MCF 10A (cell line): ENCODE measurements at regions of chr11 and their contacts with region 1.

Region 1: GRCh38 chr11:62905927-62906531 is 15.1 kb downstream of the CHRM1 start:
- DNase-seq: peak; percentile 81
- H3K4me3 Mint-ChIP-seq: no peak overlapping the region
- H3K27ac Mint-ChIP-seq: no peak overlapping the region
- H3K4me1 Mint-ChIP-seq: peaks cover 6% of the 10 kb centered on the region
- H3K27me3 Mint-ChIP-seq: peaks cover 14% of the 10 kb centered on the region
- CTCF ChIP-seq: peak; percentile 95

Region 2: GRCh38 chr11:62816557-62816956 is 89.5 kb before region 1 on chr11:
- CTCF ChIA-PET with region 1: no interaction called
- POLR2A ChIA-PET with region 1: no interaction called
- intact Hi-C with region 1: no loop called
- DNase-seq: no peak
- H3K4me3 Mint-ChIP-seq: no peak overlapping the region
- H3K27ac Mint-ChIP-seq: no peak overlapping the region
- H3K4me1 Mint-ChIP-seq: no peaks in the 10 kb centered on the region
- H3K27me3 Mint-ChIP-seq: no peaks in the 10 kb centered on the region
- CTCF ChIP-seq: no peak

Region 3: GRCh38 chr11:62922658-62923431 is 16.8 kb after region 1 on chr11:
- CTCF ChIA-PET with region 1: interaction called, 111 read pairs
- POLR2A ChIA-PET with region 1: interaction called, 4 read pairs
- intact Hi-C with region 1: no loop called
- DNase-seq: no peak
- H3K4me3 Mint-ChIP-seq: peak overlapping the region; percentile 74
- H3K27ac Mint-ChIP-seq: no peak overlapping the region
- H3K4me1 Mint-ChIP-seq: peaks cover 17% of the 10 kb centered on the region
- H3K27me3 Mint-ChIP-seq: peaks cover 20% of the 10 kb centered on the region
- CTCF ChIP-seq: peak; percentile 38

Region 4: GRCh38 chr11:62948765-62949320 is 42.8 kb after region 1 on chr11:
- CTCF ChIA-PET with region 1: interaction called, 18 read pairs
- POLR2A ChIA-PET with region 1: no interaction called
- intact Hi-C with region 1: no loop called
- DNase-seq: no peak
- H3K4me3 Mint-ChIP-seq: no peak overlapping the region
- H3K27ac Mint-ChIP-seq: no peak overlapping the region
- H3K4me1 Mint-ChIP-seq: no peaks in the 10 kb centered on the region
- H3K27me3 Mint-ChIP-seq: peaks cover 40% of the 10 kb centered on the region
- CTCF ChIP-seq: no peak

Region 5: DNA sequence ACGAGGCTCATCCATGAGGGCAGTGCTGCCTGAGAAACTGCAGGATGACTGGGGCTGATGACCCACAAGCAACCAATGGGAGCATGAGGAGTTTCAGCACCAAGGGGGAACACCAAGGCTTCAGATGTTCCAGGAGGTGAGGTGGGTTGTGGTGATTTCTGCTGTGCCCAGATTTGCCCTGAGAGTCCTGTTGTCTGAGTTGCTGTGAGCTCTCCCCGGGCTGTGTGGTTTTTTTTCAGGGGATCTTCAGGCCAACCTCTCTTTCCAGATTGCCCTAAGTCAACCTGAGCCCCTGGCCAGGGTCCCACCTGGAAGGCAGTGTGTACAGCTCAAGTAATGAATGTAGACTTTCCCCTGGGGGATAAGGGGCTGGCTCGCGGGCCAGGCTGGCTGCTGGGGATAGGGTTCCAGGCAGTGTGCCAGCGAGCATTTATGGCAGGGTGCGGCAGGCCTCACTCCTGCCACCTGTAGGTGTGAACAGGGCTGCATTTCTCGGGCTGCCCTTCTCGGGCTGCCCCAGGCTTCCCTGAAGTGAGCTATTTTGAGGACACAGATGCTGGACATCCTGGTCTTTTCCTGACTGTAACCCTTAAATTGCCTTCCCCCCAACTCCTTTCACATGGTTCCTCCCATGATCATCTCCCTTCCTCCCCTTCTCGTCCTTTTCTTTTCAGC is 69.0 kb after region 1 on chr11:
- CTCF ChIA-PET with region 1: interaction called, 26 read pairs
- POLR2A ChIA-PET with region 1: no interaction called
- intact Hi-C with region 1: loop called (anchors 1 kb)
- DNase-seq: peak; percentile 61
- H3K4me3 Mint-ChIP-seq: no peak overlapping the region
- H3K27ac Mint-ChIP-seq: no peak overlapping the region
- H3K4me1 Mint-ChIP-seq: no peaks in the 10 kb centered on the region
- H3K27me3 Mint-ChIP-seq: peaks cover 50% of the 10 kb centered on the region
- CTCF ChIP-seq: peak; percentile 56

Region 6: DNA sequence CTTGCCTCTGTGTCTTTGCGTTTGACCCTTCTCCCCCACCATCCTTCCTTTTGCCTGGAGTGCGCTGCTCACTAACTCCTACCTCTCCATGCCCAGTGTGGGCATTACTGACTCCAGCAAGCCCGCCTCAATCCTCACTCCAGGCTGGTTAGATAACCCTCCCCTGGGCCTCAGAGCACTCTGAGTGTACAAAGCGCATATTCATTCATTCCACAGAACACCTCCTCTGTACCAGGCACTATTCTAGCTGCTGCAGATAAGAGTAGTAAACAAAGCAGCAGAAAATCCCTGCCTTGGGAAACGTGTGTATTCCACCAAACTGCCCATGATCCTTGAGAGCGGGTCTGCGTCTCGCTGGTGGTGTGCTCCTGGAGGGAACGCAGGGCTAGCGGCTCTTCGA is 106.4 kb after region 1 on chr11:
- CTCF ChIA-PET with region 1: interaction called, 456 read pairs
- POLR2A ChIA-PET with region 1: no interaction called
- intact Hi-C with region 1: no loop called
- DNase-seq: no peak
- H3K4me3 Mint-ChIP-seq: no peak overlapping the region
- H3K27ac Mint-ChIP-seq: no peak overlapping the region
- H3K4me1 Mint-ChIP-seq: no peaks in the 10 kb centered on the region
- H3K27me3 Mint-ChIP-seq: peaks cover 53% of the 10 kb centered on the region
- CTCF ChIP-seq: no peak

Region 7: GRCh38 chr11:63032457-63032856 is 126.4 kb after region 1 on chr11:
- CTCF ChIA-PET with region 1: interaction called, 179 read pairs
- POLR2A ChIA-PET with region 1: interaction called, 3 read pairs
- intact Hi-C with region 1: no loop called
- DNase-seq: no peak
- H3K4me3 Mint-ChIP-seq: no peak overlapping the region
- H3K27ac Mint-ChIP-seq: no peak overlapping the region
- H3K4me1 Mint-ChIP-seq: peaks cover 6% of the 10 kb centered on the region
- H3K27me3 Mint-ChIP-seq: peaks cover 86% of the 10 kb centered on the region
- CTCF ChIP-seq: no peak